ENCODE measurements at regions of chr15 and their contacts with region 1.

Region 1: GRCh38 chr15:68730471-68730919 is 90.2 kb downstream of the ANP32A start:
- H3K4me3 Mint-ChIP-seq: no peak overlapping the region
- H3K27ac Mint-ChIP-seq: no peak overlapping the region
- H3K4me1 Mint-ChIP-seq: peaks cover 23% of the 10 kb centered on the region
- H3K27me3 Mint-ChIP-seq: peaks cover 2% of the 10 kb centered on the region

Region 2: GRCh38 chr15:68717951-68718350 is 12.5 kb before region 1 on chr15:
- intact Hi-C with region 1: no loop called
- H3K4me3 Mint-ChIP-seq: no peak overlapping the region
- H3K27ac Mint-ChIP-seq: no peak overlapping the region
- H3K4me1 Mint-ChIP-seq: no peaks in the 10 kb centered on the region
- H3K27me3 Mint-ChIP-seq: peaks cover 3% of the 10 kb centered on the region

Region 3: GRCh38 chr15:68775671-68776476 is 45.4 kb after region 1 on chr15:
- intact Hi-C with region 1: no loop called
- H3K4me3 Mint-ChIP-seq: no peak overlapping the region
- H3K27ac Mint-ChIP-seq: no peak overlapping the region
- H3K4me1 Mint-ChIP-seq: peaks cover 29% of the 10 kb centered on the region
- H3K27me3 Mint-ChIP-seq: no peaks in the 10 kb centered on the region

Region 4: DNA sequence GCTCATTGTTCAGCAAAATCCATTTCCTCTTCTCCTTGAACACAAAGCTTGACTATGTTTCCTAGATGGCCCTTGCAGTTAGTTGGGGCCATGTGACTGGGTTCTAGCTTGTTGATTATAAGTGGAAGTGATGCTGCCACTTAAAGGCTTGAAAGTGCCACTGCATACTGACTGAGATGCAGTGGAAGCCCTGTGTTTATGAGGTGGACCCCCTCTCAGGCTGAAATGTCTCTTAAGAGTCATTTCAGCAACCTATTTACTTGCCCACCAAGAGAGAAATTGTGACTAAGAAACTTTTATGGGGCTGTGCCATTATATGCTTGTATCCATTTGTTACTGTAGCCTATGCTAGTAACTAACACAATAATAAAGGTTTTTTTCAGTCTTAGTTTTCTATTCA is 98.6 kb after region 1 on chr15:
- intact Hi-C with region 1: loop called (anchors 5 kb)
- H3K4me3 Mint-ChIP-seq: no peak overlapping the region
- H3K27ac Mint-ChIP-seq: no peak overlapping the region
- H3K4me1 Mint-ChIP-seq: peaks cover 15% of the 10 kb centered on the region
- H3K27me3 Mint-ChIP-seq: peaks cover 14% of the 10 kb centered on the region

Measured in dendritic cell treated with granulocyte-macrophage colony-stimulating factor and Interleukin-4, amounts not matched to agents 40 ng/mL and 50 ng/mL, for 4 days (primary cell).